Activated CD4-positive, alpha-beta memory T cell treated with anti-CD3 and anti-CD28 coated beads, Interleukin-2, amount 10 ng/mL, durations not matched to agents 7 days and 5 days (primary cell): ENCODE measurements at regions of chr4 and their contacts with region 1.

Region 1: DNA sequence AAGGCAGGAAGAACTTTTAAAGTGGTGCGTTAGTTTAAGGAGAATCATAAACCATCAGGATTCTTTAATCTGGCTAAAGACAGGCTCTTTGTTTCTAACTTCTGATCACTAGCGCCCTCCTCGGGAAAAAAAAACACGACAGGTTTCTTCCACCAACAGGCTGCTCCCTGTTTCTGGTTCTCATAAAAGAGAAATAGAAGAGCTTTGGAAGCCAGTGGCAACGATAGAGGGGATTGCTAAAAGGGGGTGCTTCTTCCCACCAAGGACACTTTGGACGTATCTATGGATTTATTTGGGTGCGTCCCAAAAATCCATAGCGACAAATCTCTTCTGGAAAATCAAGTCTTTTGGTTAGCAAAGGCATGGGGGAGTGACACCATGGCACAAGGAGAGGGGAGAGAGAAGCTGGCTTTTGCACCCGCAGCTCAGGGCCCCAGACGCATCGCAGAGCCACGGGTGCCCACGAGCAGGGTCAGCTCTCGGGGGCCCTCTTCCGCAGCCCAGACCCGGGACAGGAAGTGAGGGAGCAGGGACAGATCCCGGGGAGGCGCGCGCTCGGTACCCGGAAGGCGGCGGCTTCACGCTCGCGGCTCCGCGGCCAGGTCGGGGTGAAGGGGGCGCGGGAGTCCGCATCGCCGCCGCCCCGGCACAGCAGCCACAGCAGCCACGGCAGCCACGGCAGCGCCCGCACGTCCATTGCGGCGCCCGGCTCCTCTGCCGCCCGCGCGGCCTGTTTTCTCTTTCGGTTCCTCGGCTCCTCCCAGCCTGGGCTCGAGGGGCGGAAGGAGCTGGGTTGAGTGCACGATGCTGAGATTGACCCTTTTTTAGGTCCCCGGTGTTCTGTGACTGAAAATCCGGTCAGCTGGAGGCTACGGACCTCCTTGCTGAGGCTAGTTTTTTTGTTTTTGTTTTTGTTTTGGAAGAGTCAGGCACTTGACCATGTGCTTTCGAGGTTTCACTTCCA is at the start of gene CTSO:
- DNase-seq: peak; percentile 78
- H3K4me3 Mint-ChIP-seq: peak within 1 kb of the TSS; percentile 91
- H3K27ac Mint-ChIP-seq: peak within 1 kb of the TSS; percentile 93
- H3K4me1 Mint-ChIP-seq: peaks cover 15% of the 10 kb centered on the region
- H3K27me3 Mint-ChIP-seq: peaks cover 4% of the 10 kb centered on the region
- total RNA-seq, gene CTSO: 5.2 to 5.3 TPM

Region 2: DNA sequence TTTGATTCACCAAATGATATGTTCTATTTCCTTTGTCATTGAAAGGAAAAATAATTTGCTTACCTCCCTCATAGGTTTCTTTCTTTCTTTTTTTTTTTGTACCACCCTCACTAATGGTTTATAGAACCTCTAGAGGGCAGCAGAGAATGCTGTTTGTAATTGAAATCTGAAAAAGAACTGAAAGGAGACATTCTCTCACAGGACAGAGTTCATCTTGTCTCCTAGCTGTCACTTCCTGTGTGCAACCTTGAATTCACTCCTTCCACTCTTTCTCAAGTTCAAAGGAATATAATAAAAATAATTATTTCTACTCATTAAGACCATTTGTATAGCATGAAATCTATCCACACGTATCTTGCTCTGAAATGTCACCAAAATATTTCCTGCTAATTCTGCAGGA is 143.6 kb before region 1 on chr4:
- CTCF ChIA-PET with region 1: interaction called, 21 read pairs
- POLR2A ChIA-PET with region 1: interaction called, 4 read pairs
- DNase-seq: no peak
- H3K4me3 Mint-ChIP-seq: no peak overlapping the region
- H3K27ac Mint-ChIP-seq: no peak overlapping the region
- H3K4me1 Mint-ChIP-seq: no peaks in the 10 kb centered on the region
- H3K27me3 Mint-ChIP-seq: no peaks in the 10 kb centered on the region

Region 3: DNA sequence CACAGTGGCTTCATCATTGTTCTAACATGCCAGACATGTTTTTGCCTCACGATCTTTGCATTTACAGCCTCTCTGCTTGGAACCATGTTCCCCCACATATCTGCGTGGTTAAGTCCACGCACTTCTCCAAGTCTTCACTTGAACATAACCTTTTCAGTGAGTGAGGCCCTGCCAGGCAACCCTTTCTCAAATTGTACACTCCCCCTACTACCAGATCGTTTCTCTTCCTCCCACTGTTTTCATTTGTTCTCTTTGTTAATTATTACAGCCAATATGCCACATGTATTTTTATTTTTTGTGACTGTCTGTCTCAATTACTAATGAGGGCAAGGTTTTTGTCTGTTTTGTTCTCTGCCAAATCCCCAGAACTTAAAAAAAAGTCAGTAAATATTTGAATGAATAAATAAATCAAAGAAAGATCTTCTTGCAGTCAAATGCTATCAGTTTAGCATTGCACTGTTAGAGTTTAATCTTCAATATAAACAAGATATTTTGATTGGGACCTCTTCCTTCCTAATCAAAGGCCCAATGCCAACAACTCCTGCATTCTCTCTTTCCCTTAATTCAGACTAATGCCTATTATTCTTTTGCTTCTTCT is 17.9 kb before region 1 on chr4:
- CTCF ChIA-PET with region 1: no interaction called
- POLR2A ChIA-PET with region 1: no interaction called
- DNase-seq: no peak
- H3K4me3 Mint-ChIP-seq: no peak overlapping the region
- H3K27ac Mint-ChIP-seq: no peak overlapping the region
- H3K4me1 Mint-ChIP-seq: no peaks in the 10 kb centered on the region
- H3K27me3 Mint-ChIP-seq: no peaks in the 10 kb centered on the region

Region 4: DNA sequence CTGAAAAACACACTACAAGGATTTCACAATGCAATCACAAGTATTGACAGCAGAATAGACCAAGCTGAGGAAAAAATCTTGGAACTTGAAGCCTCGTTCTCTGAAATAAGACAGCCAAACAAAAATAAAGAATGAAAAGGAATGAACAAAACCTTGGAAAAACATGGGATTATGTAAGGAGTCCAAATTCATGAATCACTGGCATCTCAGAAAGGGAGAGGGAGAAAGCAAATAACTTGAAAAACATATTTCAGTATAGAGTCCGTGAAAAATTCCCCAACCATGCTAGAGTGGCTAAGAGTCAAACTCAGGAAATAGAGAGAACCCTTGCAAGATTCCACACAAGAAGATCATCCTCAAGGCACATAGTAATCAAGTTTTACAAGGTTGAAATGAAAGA is 178.8 kb after region 1 on chr4:
- CTCF ChIA-PET with region 1: no interaction called
- POLR2A ChIA-PET with region 1: no interaction called
- DNase-seq: no peak
- H3K4me3 Mint-ChIP-seq: no peak overlapping the region
- H3K27ac Mint-ChIP-seq: no peak overlapping the region
- H3K4me1 Mint-ChIP-seq: no peaks in the 10 kb centered on the region
- H3K27me3 Mint-ChIP-seq: no peaks in the 10 kb centered on the region

Region 5: GRCh38 chr4:156158747-156159146 is 205.3 kb after region 1 on chr4:
- CTCF ChIA-PET with region 1: no interaction called
- POLR2A ChIA-PET with region 1: no interaction called
- DNase-seq: no peak
- H3K4me3 Mint-ChIP-seq: no peak overlapping the region
- H3K27ac Mint-ChIP-seq: no peak overlapping the region
- H3K4me1 Mint-ChIP-seq: no peaks in the 10 kb centered on the region
- H3K27me3 Mint-ChIP-seq: no peaks in the 10 kb centered on the region